Activated naive CD4-positive, alpha-beta T cell treated with anti-CD3 and anti-CD28 coated beads for 36 hours (primary cell): ENCODE measurements at regions of chr6 and their contacts with region 1.

Region 1: GRCh38 chr6:24689964-24690363 is 23.1 kb downstream of the ACOT13 start:
- DNase-seq: no peak
- H3K4me3 Mint-ChIP-seq: no peak overlapping the region
- H3K27ac Mint-ChIP-seq: no peak overlapping the region
- H3K4me1 Mint-ChIP-seq: peaks cover 22% of the 10 kb centered on the region
- H3K27me3 Mint-ChIP-seq: no peaks in the 10 kb centered on the region

Region 2: DNA sequence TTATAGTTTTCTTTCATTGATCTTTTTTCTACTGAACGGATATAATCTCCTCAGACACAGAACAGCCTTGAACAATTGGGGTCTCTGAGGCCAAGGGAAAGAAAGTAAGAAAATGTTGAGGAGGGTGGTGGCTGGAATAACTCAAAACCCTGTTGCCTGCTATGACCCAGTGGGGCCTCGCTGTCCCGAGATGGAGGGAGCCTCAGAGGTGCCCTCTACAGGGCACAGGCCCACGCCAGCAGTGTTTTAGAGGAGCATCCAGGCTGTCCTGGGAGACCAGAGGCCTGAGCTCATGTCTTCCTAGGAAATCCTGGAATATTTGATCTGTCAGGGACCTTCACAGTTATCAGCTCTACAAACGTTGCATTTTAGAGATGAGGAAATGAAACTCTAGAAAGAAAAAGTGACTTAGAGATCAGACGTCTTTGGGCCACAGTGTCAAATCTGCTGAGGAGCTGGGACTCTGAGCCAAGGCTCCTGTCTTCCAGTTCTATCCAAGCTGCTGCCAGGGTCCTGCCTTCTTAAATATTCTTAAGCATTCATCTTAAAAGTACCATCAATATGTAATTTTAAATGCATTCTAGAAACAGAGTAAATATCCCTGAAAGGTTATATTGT is 168.9 kb before region 1 on chr6:
- CTCF ChIA-PET with region 1: no interaction called
- intact Hi-C with region 1: loop called (anchors 1 kb)
- DNase-seq: peak; percentile 62
- H3K4me3 Mint-ChIP-seq: no peak overlapping the region
- H3K27ac Mint-ChIP-seq: no peak overlapping the region
- H3K4me1 Mint-ChIP-seq: peaks cover 8% of the 10 kb centered on the region
- H3K27me3 Mint-ChIP-seq: no peaks in the 10 kb centered on the region

Region 3: DNA sequence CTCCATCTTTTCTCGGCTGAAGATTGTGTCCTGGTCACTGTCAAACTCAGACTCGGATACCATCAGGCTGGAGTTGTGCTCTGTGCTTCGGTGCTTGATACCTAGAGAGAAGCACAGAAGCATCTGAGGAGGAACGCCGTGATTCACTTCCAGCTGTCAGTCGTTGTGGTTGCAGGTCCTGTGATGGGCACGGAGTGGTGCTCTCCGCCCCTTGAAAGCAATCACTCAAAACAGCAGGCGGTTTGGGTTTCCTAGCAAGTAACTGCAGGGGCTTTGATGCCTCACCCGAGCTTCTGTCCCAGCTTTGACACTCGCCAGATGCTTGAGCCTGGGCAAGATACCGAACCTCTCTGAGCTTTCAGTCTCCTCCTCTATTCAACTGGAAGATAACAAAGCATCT is 142.7 kb before region 1 on chr6:
- CTCF ChIA-PET with region 1: no interaction called
- intact Hi-C with region 1: loop called (anchors 1 kb)
- DNase-seq: peak; percentile 81
- H3K4me3 Mint-ChIP-seq: no peak overlapping the region
- H3K27ac Mint-ChIP-seq: no peak overlapping the region
- H3K4me1 Mint-ChIP-seq: peaks cover 8% of the 10 kb centered on the region
- H3K27me3 Mint-ChIP-seq: peaks cover 5% of the 10 kb centered on the region

Region 4: GRCh38 chr6:24802271-24803059 is 112.5 kb after region 1 on chr6:
- CTCF ChIA-PET with region 1: no interaction called
- intact Hi-C with region 1: no loop called
- DNase-seq: no peak
- H3K4me3 Mint-ChIP-seq: no peak overlapping the region
- H3K27ac Mint-ChIP-seq: no peak overlapping the region
- H3K4me1 Mint-ChIP-seq: peaks cover 16% of the 10 kb centered on the region
- H3K27me3 Mint-ChIP-seq: no peaks in the 10 kb centered on the region